Heart left ventricle (tissue), 16 donors: ENCODE measurements at regions of chr5 and their contacts with region 1.

Region 1: GRCh38 chr5:135887351-135887864 is 8.2 kb downstream of the IL9 start:
- DNase-seq: peak; percentile 39 to 67 (median 51)
- ATAC-seq: peak; percentile 68 to 90 (median 86)
- H3K4me3 ChIP-seq: no peak overlapping the region
- H3K27ac ChIP-seq: no peak overlapping the region
- H3K4me1 ChIP-seq: peaks cover 0 to 9% (median 3%) of the 10 kb centered on the region in 12 donors
- H3K27me3 ChIP-seq: peaks cover 0 to 39% (median 2%) of the 10 kb centered on the region in 9 donors
- CTCF ChIP-seq: peak; percentile 72 to 90 (median 84)
- POLR2A ChIP-seq: no peak

Region 2: GRCh38 chr5:135857630-135858304 is 29.6 kb before region 1 on chr5:
- intact Hi-C with region 1: no loop called
- DNase-seq: no peak
- ATAC-seq: no peak
- H3K4me3 ChIP-seq: no peak overlapping the region
- H3K27ac ChIP-seq: no peak overlapping the region
- H3K4me1 ChIP-seq: peaks cover 0 to 5% (median 0%) of the 10 kb centered on the region in 12 donors
- H3K27me3 ChIP-seq: no peaks in the 10 kb centered on the region
- CTCF ChIP-seq: no peak
- POLR2A ChIP-seq: no peak

Region 3: DNA sequence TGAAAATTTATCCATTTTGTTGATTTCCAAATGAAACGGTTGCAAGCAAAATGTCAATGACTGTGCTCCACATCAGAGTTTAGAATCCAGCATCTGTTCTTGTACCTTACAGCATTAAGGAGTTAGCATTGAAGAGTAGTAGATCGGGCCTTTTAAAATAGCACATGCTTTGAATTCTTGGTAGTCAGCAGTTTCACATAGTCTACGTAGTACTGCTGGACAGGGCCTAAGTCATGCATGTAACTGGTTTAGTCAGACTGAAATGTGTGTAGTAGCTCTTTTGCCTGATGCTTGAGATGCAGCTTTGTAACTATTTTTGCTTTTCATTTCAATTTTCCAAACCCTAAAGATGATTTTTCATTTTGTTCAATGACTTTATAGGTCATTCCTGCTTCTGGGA is 47.5 kb after region 1 on chr5:
- intact Hi-C with region 1: loop called in 1 of 10 experiments (anchors 5 kb)
- DNase-seq: no peak
- ATAC-seq: peak in 2 of 4 donors; percentile 64 to 77
- H3K4me3 ChIP-seq: no peak overlapping the region
- H3K27ac ChIP-seq: no peak overlapping the region
- H3K4me1 ChIP-seq: peaks cover 0 to 9% (median 1%) of the 10 kb centered on the region in 12 donors
- H3K27me3 ChIP-seq: peaks cover 11 to 37% (median 24%) of the 10 kb centered on the region in 9 donors
- CTCF ChIP-seq: no peak
- POLR2A ChIP-seq: no peak

Region 4: GRCh38 chr5:135964670-135965320 is 77.4 kb after region 1 on chr5:
- intact Hi-C with region 1: no loop called
- DNase-seq: no peak
- ATAC-seq: peak in 1 of 4 donors; percentile 45
- H3K4me3 ChIP-seq: no peak overlapping the region
- H3K27ac ChIP-seq: no peak overlapping the region
- H3K4me1 ChIP-seq: peaks cover 0 to 5% (median 0%) of the 10 kb centered on the region in 12 donors
- H3K27me3 ChIP-seq: no peaks in the 10 kb centered on the region
- CTCF ChIP-seq: peak in 3 of 12 donors; percentile 6 to 37 (median 12)
- POLR2A ChIP-seq: no peak

Region 5: GRCh38 chr5:136062366-136063274 is 175.2 kb after region 1 on chr5:
- intact Hi-C with region 1: loop called in 5 of 10 experiments (anchors 2 to 10 kb)
- DNase-seq: peak in 1 of 5 donors; percentile 18
- ATAC-seq: peak in 1 of 4 donors; percentile 29
- H3K4me3 ChIP-seq: no peak overlapping the region
- H3K27ac ChIP-seq: no peak overlapping the region
- H3K4me1 ChIP-seq: peaks cover 0 to 42% (median 13%) of the 10 kb centered on the region in 12 donors
- H3K27me3 ChIP-seq: no peaks in the 10 kb centered on the region
- CTCF ChIP-seq: peak in 11 of 12 donors; percentile 37 to 60 (median 49)
- POLR2A ChIP-seq: no peak

Region 6: DNA sequence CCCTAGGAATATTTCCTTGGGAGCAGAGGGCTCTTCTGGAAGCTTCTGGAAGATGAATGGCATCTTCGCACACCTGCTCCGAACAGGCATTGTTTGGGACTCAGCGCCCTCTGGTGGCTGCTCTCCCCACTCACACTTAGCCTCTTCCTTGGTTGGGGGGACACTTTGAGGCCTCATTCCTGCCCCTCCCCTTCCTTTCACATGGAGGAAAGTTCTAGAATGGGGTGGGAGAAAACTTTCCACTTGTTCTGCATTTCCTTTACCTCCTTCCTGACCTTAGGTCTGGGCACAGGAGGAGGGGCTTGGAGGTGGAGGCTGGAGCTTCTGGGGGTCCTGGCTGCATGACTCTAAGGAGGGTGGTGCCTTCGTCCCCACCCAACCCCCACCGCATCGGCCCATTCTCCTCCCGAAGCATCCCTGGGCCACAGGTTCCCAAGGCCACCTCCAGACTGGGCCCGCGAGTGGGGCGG is 324.9 kb after region 1 on chr5:
- intact Hi-C with region 1: loop called (anchors 1 to 2 kb)
- DNase-seq: peak; percentile 41 to 76 (median 60)
- ATAC-seq: peak in 2 of 4 donors; percentile 56 to 77
- H3K4me3 ChIP-seq: no peak overlapping the region
- H3K27ac ChIP-seq: no peak overlapping the region
- H3K4me1 ChIP-seq: no peaks in the 10 kb centered on the region
- H3K27me3 ChIP-seq: peaks cover 0 to 40% (median 9%) of the 10 kb centered on the region in 9 donors
- CTCF ChIP-seq: peak; percentile 73 to 96 (median 84)
- POLR2A ChIP-seq: no peak

Region 7: GRCh38 chr5:136769900-136770684 is 882.7 kb after region 1 on chr5:
- intact Hi-C with region 1: loop called in 1 of 10 experiments (anchors 10 kb)
- DNase-seq: peak; percentile 29 to 72 (median 62)
- ATAC-seq: peak; percentile 42 to 86 (median 76)
- H3K4me3 ChIP-seq: no peak overlapping the region
- H3K27ac ChIP-seq: no peak overlapping the region
- H3K4me1 ChIP-seq: no peaks in the 10 kb centered on the region
- H3K27me3 ChIP-seq: peaks cover 0 to 4% (median 0%) of the 10 kb centered on the region in 9 donors
- CTCF ChIP-seq: peak; percentile 51 to 74 (median 66)
- POLR2A ChIP-seq: no peak